ENCODE measurements at regions of chr2 and their contacts with region 1.

Region 1: GRCh38 chr2:170715062-170715931 is at the start of gene SP5:
- DNase-seq: peak; percentile 100
- ATAC-seq: peak; percentile 72
- H3K4me3 ChIP-seq: peak within 1 kb of the TSS; percentile 95 to 99 (median 99)
- H3K27ac ChIP-seq: peak within 1 kb of the TSS; percentile 100
- H3K4me1 ChIP-seq: peaks cover 31% of the 10 kb centered on the region
- H3K27me3 ChIP-seq: no peaks in the 10 kb centered on the region; a peak in 1 of 5 replicates
- CTCF ChIP-seq: no peak
- EP300 ChIP-seq: peak; percentile 82 to 97
- POLR2A ChIP-seq: peak in 1 of 2 experiments; percentile 91; a peak in 2 of 4 replicates
- RAD21 ChIP-seq: peak; percentile 35; the same call in 1 of the 2 replicates
- total RNA-seq, gene SP5: 86.9 and 119 TPM in 2 replicates

Region 2: DNA sequence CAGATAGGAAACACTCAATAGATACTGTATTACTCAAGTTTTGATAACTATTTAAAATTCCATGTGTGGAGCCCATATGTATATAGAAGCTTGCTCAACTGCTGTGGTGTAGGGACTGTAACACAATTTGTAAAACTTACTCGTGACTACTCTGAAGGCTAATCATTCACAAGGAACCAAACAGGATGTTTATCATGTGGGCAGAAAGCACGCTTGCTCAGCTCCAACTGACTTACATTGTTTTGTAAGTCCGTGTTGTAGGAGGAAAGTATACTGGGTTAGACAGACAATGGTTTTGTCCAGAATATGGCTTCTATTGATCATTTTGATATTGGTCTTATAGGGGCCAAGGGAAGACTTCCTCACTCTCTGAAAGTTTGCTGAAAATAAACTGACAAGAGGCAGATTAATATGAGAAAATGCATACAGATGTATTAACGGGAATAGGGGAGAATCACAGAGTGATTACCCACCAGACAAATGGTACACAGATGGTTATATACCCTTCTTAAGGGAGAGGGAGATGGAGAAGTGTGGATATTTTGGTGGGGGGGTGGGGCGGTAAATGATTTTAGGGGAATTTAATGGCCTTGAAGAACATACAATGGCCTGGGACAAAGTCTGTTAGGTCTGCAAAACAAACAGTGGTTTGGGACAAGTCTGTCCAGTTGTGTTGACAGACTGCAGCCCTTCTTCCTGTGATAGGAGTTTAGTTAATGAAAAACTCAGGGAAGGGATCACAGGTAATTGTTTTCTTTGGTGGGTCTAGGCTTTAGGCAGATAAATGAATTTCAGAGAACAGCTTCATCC is 259.5 kb before region 1 on chr2:
- CTCF ChIA-PET with region 1: no interaction called
- POLR2A ChIA-PET with region 1: interaction called, 123 read pairs
- in situ Hi-C with region 1: loop called (anchors 5 kb)
- intact Hi-C with region 1: loop called (anchors 1 kb)
- DNase-seq: peak; percentile 98
- ATAC-seq: peak; percentile 93
- H3K4me3 ChIP-seq: peak overlapping the region in 2 of 3 experiments; percentile 23 to 43; a peak in 3 of 6 replicates
- H3K27ac ChIP-seq: peak overlapping the region; percentile 84
- H3K4me1 ChIP-seq: peaks cover 75% of the 10 kb centered on the region
- H3K27me3 ChIP-seq: no peaks in the 10 kb centered on the region
- CTCF ChIP-seq: 0 out of 2 replicates have a peak, but pooled peaks have one; percentile 3
- EP300 ChIP-seq: peak; percentile 75 to 99; a peak in 3 of 4 replicates
- POLR2A ChIP-seq: peak; percentile 43 to 67; a peak in 3 of 4 replicates
- RAD21 ChIP-seq: 0 out of 2 replicates have a peak, but pooled peaks have one; percentile 29

Region 3: GRCh38 chr2:170701011-170701410 is 14.3 kb before region 1 on chr2:
- CTCF ChIA-PET with region 1: no interaction called
- POLR2A ChIA-PET with region 1: interaction called, 15 read pairs
- in situ Hi-C with region 1: no loop called
- intact Hi-C with region 1: no loop called
- DNase-seq: no peak
- ATAC-seq: no peak
- H3K4me3 ChIP-seq: no peak overlapping the region
- H3K27ac ChIP-seq: no peak overlapping the region
- H3K4me1 ChIP-seq: peaks cover 36% of the 10 kb centered on the region
- H3K27me3 ChIP-seq: no peaks in the 10 kb centered on the region
- CTCF ChIP-seq: no peak
- EP300 ChIP-seq: no peak
- POLR2A ChIP-seq: no peak
- RAD21 ChIP-seq: no peak

Region 4: GRCh38 chr2:170770606-170771420 is 55.5 kb after region 1 on chr2:
- CTCF ChIA-PET with region 1: no interaction called
- POLR2A ChIA-PET with region 1: interaction called, 10 read pairs
- in situ Hi-C with region 1: no loop called
- intact Hi-C with region 1: loop called (anchors 2 kb)
- DNase-seq: peak; percentile 81
- ATAC-seq: peak; percentile 95
- H3K4me3 ChIP-seq: peak overlapping the region; percentile 65 to 92 (median 87)
- H3K27ac ChIP-seq: peak overlapping the region; percentile 61
- H3K4me1 ChIP-seq: peaks cover 24% of the 10 kb centered on the region
- H3K27me3 ChIP-seq: peaks cover 0 to 14% of the 10 kb centered on the region in 2 experiments; a peak in 2 of 5 replicates
- CTCF ChIP-seq: peak; percentile 54
- EP300 ChIP-seq: no peak
- POLR2A ChIP-seq: peak in 1 of 2 experiments; percentile 23; a peak in 2 of 4 replicates
- RAD21 ChIP-seq: peak; percentile 59

Region 5: DNA sequence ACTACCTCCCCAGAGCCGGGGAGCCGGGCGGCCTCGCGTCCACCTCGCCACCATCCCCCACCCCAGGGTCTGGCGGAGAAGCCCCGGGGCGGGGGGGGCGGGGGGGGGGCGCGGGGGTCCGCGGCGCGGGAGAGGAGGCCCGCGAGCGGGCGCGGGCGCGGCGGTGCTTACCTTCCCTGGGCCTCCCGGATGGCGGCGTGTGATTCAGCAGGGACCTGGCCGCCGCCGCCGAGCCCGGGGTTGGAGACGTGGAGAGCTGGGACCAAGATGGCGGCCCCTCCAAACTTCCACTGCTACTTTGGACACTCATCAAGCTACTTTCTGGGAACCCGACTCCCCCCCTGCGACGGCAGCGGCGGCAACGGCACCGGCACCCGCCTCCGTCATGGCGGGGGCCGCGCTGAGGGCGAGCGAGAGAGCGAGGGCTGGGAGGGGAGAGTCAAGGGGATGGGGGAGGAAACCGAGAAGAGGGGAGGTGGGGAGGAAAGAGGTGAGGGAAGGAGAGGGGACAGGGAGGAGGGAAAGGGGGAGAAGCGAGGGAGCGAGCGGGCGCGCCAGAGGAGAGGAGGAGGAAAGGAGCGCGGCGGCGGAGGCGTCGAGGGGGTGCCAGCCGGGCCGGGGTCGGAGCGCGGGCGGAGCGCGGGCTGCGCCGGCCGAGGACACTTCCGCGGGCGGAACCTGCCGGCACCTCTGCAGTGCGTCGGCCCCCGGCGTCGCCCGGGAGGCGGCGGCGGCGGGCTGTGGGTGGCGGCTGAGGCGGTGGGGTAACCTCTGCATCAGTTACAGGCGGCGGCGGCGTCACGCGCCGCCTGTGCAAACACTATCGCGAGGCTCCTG is 445.0 kb after region 1 on chr2 and contains the start of gene TLK1:
- CTCF ChIA-PET with region 1: no interaction called
- POLR2A ChIA-PET with region 1: no interaction called
- in situ Hi-C with region 1: loop called (anchors 10 kb)
- intact Hi-C with region 1: no loop called
- DNase-seq: peak; percentile 62
- ATAC-seq: peak; percentile 81
- H3K4me3 ChIP-seq: peak within 1 kb of the TSS; percentile 73 to 99 (median 90)
- H3K27ac ChIP-seq: peak within 1 kb of the TSS; percentile 96
- H3K4me1 ChIP-seq: peaks cover 52% of the 10 kb centered on the region
- H3K27me3 ChIP-seq: no peaks in the 10 kb centered on the region; a peak in 1 of 5 replicates
- CTCF ChIP-seq: peak; percentile 15; the same call in 1 of the 2 replicates
- EP300 ChIP-seq: no peak
- POLR2A ChIP-seq: peak; percentile 49 to 72; a peak in 3 of 4 replicates
- RAD21 ChIP-seq: peak; percentile 80
- total RNA-seq, gene TLK1: 28.7 and 52.7 TPM in 2 replicates